ENCODE measurements at regions of chr7 and their contacts with region 1.

Region 1: DNA sequence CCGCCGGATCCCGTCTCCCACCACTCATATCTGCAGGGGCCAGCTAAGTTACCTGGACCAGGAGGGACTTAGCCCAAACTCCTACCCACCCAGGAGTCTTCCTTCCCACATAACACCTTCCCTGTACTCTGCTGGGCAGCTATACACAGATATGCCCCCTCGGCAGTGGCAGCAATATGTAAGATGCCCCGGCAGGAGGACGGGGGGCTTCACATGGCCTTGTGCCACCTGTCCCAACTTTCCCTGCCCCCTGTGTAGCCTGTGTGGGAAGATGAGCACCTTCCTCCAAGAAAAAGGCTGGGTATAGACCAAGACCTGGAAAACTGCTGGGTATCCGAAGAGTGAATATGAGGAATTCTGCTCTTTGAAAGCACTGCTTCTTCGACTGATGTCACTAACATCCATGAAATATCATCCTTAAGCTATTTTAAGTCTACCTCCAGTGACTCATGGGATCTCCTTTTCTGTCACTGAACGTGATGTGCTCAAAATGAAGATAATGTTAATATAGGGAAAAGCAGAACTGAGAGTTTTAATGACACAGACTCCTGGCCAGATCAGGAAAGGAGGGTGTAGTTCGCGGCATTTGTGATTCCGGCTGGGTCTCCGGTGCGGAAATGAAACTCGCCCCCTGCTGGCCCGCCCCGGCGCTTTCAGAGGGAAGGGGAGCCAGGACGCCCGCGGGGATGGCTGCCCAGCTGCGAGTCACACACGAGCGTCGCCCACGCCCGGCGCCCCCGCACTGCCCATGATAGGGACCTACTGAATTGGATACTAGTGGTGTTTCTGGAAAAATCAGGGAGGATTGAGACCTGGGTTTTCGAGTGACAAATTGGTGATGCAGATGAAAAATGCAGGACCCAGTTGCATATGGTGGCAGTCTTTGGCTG is 256.9 kb upstream of the NFE2L3 start:
- DNase-seq: peak; percentile 77
- ATAC-seq: peak; percentile 88
- H3K4me3 Mint-ChIP-seq: peak overlapping the region; percentile 75
- H3K27ac Mint-ChIP-seq: peak overlapping the region; percentile 62
- H3K4me1 Mint-ChIP-seq: peaks cover 32% of the 10 kb centered on the region
- H3K27me3 Mint-ChIP-seq: peaks cover 38% of the 10 kb centered on the region
- CTCF ChIP-seq: peak; percentile 36

Region 2: DNA sequence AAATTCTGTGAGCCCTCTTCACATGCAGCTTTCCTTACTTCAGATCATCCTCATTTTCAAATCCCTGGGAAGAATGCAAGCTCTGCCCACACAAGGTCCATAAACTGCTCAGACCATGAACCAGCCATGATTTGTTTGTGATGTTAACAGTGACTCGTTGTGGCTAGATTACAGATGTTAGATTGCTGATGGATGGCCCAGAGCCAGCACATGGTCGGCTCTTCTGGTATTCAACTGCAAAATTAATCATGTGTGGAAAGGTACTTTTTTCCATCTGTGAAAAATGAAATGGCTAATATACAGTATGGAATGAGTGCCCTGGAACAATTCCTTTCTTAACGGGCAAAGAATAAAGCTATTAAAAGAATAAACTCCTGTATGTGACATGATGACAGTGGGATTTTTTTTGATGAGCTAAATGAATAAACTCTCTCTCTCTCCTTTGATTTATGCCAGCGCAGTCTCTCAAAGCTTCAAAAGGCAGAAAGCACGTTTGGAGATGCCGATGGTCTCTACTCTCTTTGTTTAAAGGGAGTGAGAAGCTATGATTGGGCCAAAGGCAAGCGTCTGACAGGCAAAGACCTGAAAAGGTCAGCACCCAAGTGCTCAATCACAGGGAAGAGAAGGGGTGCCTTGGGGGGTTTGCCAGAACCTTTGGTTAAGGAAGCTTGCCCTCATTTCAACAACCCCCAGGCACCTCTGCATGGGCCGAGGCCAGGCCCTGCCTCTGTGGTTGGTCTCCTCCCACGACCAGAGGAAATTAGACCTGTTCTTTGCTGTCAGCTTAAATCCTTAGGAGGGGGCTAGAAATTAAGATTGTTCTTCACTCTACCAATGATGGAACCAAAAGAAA is 187.2 kb before region 1 on chr7:
- CTCF ChIA-PET with region 1: no interaction called
- POLR2A ChIA-PET with region 1: no interaction called
- intact Hi-C with region 1: no loop called
- DNase-seq: no peak
- ATAC-seq: no peak
- H3K4me3 Mint-ChIP-seq: no peak overlapping the region
- H3K27ac Mint-ChIP-seq: no peak overlapping the region
- H3K4me1 Mint-ChIP-seq: no peaks in the 10 kb centered on the region
- H3K27me3 Mint-ChIP-seq: peaks cover 15% of the 10 kb centered on the region
- CTCF ChIP-seq: no peak

Region 3: GRCh38 chr7:25918731-25919130 is 23.6 kb after region 1 on chr7:
- CTCF ChIA-PET with region 1: no interaction called
- POLR2A ChIA-PET with region 1: no interaction called
- intact Hi-C with region 1: no loop called
- DNase-seq: no peak
- ATAC-seq: no peak
- H3K4me3 Mint-ChIP-seq: no peak overlapping the region
- H3K27ac Mint-ChIP-seq: no peak overlapping the region
- H3K4me1 Mint-ChIP-seq: no peaks in the 10 kb centered on the region
- H3K27me3 Mint-ChIP-seq: peaks cover 25% of the 10 kb centered on the region
- CTCF ChIP-seq: no peak

Region 4: DNA sequence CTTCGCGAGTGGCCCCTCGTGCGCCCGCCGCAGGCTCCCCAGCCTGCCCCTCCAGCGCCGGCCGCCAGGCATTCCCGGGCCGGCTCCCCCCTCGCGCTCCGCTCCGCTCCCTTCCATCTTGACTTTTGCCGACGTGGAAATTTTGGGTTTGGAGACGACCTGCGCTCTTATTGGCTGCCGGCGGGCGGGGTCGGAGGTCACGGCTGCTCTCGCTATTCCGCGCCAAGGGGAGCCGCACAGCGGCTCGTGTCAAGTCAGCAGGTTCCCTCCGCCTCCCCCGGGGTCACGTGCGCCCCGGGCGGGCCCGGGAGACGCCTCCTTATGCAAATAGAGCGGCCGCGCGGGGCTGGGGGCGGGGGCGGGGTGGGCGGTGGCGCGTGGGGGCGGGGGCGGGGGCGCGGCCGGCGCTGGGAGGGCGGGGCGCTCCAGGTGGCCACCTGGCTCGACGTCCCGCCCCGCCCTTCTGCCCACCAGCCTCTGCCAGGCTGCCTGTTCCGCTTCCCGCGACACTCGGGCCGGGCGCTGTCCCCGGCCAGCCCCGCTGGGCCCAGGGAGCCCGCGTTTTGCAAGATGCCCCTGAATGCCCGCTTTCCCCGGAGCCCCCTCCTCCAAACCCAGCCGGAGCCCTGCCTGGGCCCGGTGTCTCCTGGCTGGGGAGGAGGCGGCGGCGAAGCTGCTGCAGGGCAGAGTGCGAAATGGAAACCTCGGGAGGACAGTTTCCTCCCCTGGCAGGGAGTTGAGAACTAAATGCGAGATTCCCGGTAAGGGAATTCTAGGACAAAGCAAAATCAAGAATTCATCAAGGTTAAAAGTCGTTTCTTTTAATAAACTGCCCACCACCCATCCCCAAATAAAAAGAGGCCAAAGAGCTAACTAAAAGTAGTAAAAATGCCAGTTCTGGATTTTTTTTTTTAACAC is 56.1 kb after region 1 on chr7:
- CTCF ChIA-PET with region 1: interaction called, 4 read pairs
- POLR2A ChIA-PET with region 1: no interaction called
- intact Hi-C with region 1: loop called (anchors 2 kb)
- DNase-seq: peak; percentile 82
- ATAC-seq: peak; percentile 93
- H3K4me3 Mint-ChIP-seq: peak overlapping the region; percentile 92
- H3K27ac Mint-ChIP-seq: peak overlapping the region; percentile 81
- H3K4me1 Mint-ChIP-seq: peaks cover 35% of the 10 kb centered on the region
- H3K27me3 Mint-ChIP-seq: peaks cover 31% of the 10 kb centered on the region
- CTCF ChIP-seq: no peak

Region 5: GRCh38 chr7:26061688-26062150 is 166.6 kb after region 1 on chr7:
- CTCF ChIA-PET with region 1: interaction called, 61 read pairs
- POLR2A ChIA-PET with region 1: interaction called, 4 read pairs
- intact Hi-C with region 1: loop called (anchors 1 kb)
- DNase-seq: peak; percentile 51
- ATAC-seq: peak; percentile 82
- H3K4me3 Mint-ChIP-seq: no peak overlapping the region
- H3K27ac Mint-ChIP-seq: no peak overlapping the region
- H3K4me1 Mint-ChIP-seq: peaks cover 4% of the 10 kb centered on the region
- H3K27me3 Mint-ChIP-seq: peaks cover 42% of the 10 kb centered on the region
- CTCF ChIP-seq: no peak

Region 6: DNA sequence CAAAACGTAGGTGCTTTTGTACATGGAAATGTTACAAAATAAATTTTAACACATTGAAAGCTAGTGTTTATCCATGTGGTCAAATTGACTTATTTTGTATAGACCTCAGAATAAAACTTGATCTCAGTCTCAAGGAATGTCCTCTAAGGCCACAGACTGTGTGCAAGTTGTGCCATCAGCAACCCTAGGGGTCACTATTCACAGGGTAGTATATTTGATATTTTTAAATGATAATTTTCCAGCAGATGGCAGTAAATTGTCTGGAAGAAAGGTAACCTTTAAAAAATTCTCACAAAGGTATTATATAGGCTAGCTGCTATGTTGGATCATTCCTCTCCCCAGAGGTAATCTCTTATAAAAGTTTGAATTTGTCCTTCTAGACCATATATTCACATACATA is 383.6 kb after region 1 on chr7:
- CTCF ChIA-PET with region 1: no interaction called
- POLR2A ChIA-PET with region 1: no interaction called
- intact Hi-C with region 1: loop called (anchors 1 kb)
- DNase-seq: no peak
- ATAC-seq: peak; percentile 82
- H3K4me3 Mint-ChIP-seq: no peak overlapping the region
- H3K27ac Mint-ChIP-seq: no peak overlapping the region
- H3K4me1 Mint-ChIP-seq: peaks cover 11% of the 10 kb centered on the region
- H3K27me3 Mint-ChIP-seq: peaks cover 3% of the 10 kb centered on the region
- CTCF ChIP-seq: no peak

Region 7: DNA sequence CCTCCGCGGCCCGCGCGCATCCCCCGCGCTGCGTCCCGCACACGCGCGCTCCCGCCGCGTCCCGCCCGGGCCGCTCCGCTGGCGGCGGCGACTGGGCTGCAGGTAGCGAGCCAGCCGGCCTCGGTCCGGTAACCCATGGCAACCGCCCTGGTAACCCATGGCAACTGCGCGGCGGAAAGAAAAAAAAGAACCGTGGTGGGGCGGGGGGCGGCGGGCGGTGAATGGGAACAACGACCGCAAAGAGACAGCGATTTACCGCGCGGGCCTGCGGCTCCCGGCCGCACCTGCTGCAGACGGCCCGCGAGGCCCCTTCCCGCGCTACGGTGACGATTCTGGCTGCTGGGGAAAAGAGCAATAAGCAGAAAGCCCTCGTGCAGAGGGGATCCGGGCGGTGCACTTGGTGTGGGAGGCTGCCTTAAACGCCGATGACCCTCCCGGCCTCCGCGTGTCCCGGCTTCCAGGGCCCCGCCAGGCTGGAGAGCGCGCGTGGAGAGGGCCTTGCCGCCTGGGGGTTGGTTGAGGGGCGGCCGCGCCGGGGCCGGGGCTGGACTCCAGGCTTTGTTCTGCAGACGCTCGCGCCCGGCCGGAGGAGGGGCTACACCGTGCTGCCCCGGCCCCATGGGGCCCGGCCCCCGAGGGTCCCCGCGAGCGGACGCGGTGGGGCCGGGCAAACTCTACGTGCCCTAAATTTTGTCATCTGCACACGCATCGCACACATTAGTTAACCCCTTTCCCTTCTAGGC is 481.2 kb after region 1 on chr7:
- CTCF ChIA-PET with region 1: interaction called, 18 read pairs
- POLR2A ChIA-PET with region 1: no interaction called
- intact Hi-C with region 1: no loop called
- DNase-seq: peak; percentile 47
- ATAC-seq: peak; percentile 46
- H3K4me3 Mint-ChIP-seq: peak overlapping the region; percentile 83
- H3K27ac Mint-ChIP-seq: no peak overlapping the region
- H3K4me1 Mint-ChIP-seq: peaks cover 4% of the 10 kb centered on the region
- H3K27me3 Mint-ChIP-seq: peaks cover 2% of the 10 kb centered on the region
- CTCF ChIP-seq: no peak

Region 8: GRCh38 chr7:26500749-26501352 is 605.7 kb after region 1 on chr7:
- CTCF ChIA-PET with region 1: interaction called, 11 read pairs
- POLR2A ChIA-PET with region 1: no interaction called
- intact Hi-C with region 1: loop called (anchors 1 kb)
- DNase-seq: no peak
- ATAC-seq: peak; percentile 76
- H3K4me3 Mint-ChIP-seq: no peak overlapping the region
- H3K27ac Mint-ChIP-seq: no peak overlapping the region
- H3K4me1 Mint-ChIP-seq: no peaks in the 10 kb centered on the region
- H3K27me3 Mint-ChIP-seq: peaks cover 10% of the 10 kb centered on the region
- CTCF ChIP-seq: peak; percentile 29

Measured in activated B cell treated with CpG ODN at 0.5 μM for 24 hours (primary cell).